ENCODE measurements at regions of chr7 and their contacts with region 1.

Region 1: DNA sequence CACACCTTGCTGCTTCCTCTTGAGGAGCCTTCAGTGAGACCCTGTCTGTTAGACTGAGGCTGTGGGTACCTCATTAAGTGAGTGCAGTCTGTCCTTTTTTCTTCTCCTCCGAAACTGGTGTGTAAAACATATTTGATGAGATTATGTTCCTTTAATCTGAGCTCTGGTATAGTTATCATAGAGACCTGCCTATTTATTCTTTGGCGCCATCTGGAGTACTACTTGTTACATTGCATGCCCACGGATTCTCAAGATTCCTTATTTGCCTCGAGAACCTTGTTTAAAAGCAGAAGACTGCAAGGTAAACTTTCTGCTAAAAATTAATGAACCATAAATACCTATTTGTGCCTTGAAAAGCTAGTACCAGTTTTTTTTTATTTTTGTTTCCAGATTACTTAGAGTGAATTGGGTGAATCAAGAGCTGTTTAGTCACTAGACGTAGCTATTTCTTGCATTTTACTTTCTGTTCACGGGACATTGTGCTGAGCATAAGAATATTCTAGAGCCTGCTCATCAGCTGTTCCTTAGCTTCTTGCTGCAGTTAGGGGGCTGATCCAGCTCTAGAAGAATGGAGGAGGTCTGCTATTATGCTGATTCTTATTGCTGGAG is 16.9 kb upstream of the STMP1 start:
- DNase-seq: no peak
- ATAC-seq: peak; percentile 82 to 91 (median 88)
- H3K4me3 ChIP-seq: no peak overlapping the region
- H3K27ac ChIP-seq: no peak overlapping the region
- H3K4me1 ChIP-seq: peaks cover 0 to 6% (median 0%) of the 10 kb centered on the region in 4 donors
- H3K27me3 ChIP-seq: no peaks in the 10 kb centered on the region
- CTCF ChIP-seq: peak; percentile 70 to 80 (median 74)
- POLR2A ChIP-seq: no peak

Region 2: GRCh38 chr7:135095229-135095849 is 550.1 kb before region 1 on chr7:
- intact Hi-C with region 1: no loop called
- DNase-seq: no peak
- ATAC-seq: no peak
- H3K4me3 ChIP-seq: no peak overlapping the region
- H3K27ac ChIP-seq: no peak overlapping the region
- H3K4me1 ChIP-seq: no peaks in the 10 kb centered on the region
- H3K27me3 ChIP-seq: no peaks in the 10 kb centered on the region
- CTCF ChIP-seq: no peak
- POLR2A ChIP-seq: no peak

Region 3: GRCh38 chr7:135274495-135275268 is 370.7 kb before region 1 on chr7:
- intact Hi-C with region 1: loop called in 1 of 2 experiments (anchors 10 kb)
- DNase-seq: peak in 1 of 3 donors; percentile 61
- ATAC-seq: peak; percentile 81 to 87 (median 86)
- H3K4me3 ChIP-seq: no peak overlapping the region
- H3K27ac ChIP-seq: no peak overlapping the region
- H3K4me1 ChIP-seq: no peaks in the 10 kb centered on the region
- H3K27me3 ChIP-seq: no peaks in the 10 kb centered on the region
- CTCF ChIP-seq: peak; percentile 76 to 94 (median 88)
- POLR2A ChIP-seq: no peak

Region 4: GRCh38 chr7:135877805-135878204 is 232.4 kb after region 1 on chr7:
- intact Hi-C with region 1: no loop called
- DNase-seq: no peak
- ATAC-seq: no peak
- H3K4me3 ChIP-seq: no peak overlapping the region
- H3K27ac ChIP-seq: no peak overlapping the region
- H3K4me1 ChIP-seq: no peaks in the 10 kb centered on the region
- H3K27me3 ChIP-seq: no peaks in the 10 kb centered on the region
- CTCF ChIP-seq: no peak
- POLR2A ChIP-seq: no peak